A673 (cell line): ENCODE measurements at regions of chr4 and their contacts with region 1.

Region 1: GRCh38 chr4:5824635-5825034 is 68.3 kb downstream of the CRMP1 start:
- DNase-seq: peak; percentile 63
- H3K4me3 ChIP-seq: no peak overlapping the region
- H3K27ac ChIP-seq: no peak overlapping the region
- H3K4me1 ChIP-seq: no peaks in the 10 kb centered on the region
- H3K27me3 ChIP-seq: no peaks in the 10 kb centered on the region
- CTCF ChIP-seq: peak; percentile 68

Region 2: GRCh38 chr4:5338531-5338930 is 486.1 kb before region 1 on chr4:
- CTCF ChIA-PET with region 1: no interaction called
- POLR2A ChIA-PET with region 1: no interaction called
- intact Hi-C with region 1: no loop called
- DNase-seq: peak; percentile 29
- H3K4me3 ChIP-seq: no peak overlapping the region
- H3K27ac ChIP-seq: no peak overlapping the region
- H3K4me1 ChIP-seq: peaks cover 27% of the 10 kb centered on the region
- H3K27me3 ChIP-seq: no peaks in the 10 kb centered on the region
- CTCF ChIP-seq: no peak

Region 3: DNA sequence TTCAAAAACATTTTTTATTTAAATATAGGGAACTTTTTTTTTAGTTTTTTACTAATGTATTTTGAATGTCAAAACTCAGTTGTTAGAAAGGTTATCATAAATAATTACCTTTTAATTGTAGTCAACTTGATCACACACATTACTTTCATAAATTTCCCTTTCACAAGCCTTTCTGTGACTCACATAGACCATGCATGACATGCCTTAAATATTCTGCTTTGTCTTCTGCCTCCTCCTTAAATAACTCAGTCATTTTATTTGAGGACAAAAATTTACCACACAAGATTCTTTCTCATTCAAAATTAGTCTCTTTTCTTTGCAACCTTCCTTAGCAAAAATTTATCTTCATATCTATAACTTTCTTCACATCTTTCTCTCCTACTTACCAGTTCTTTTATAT is 336.2 kb before region 1 on chr4:
- CTCF ChIA-PET with region 1: no interaction called
- POLR2A ChIA-PET with region 1: no interaction called
- intact Hi-C with region 1: no loop called
- DNase-seq: no peak
- H3K4me3 ChIP-seq: no peak overlapping the region
- H3K27ac ChIP-seq: no peak overlapping the region
- H3K4me1 ChIP-seq: no peaks in the 10 kb centered on the region
- H3K27me3 ChIP-seq: no peaks in the 10 kb centered on the region
- CTCF ChIP-seq: no peak

Region 4: GRCh38 chr4:5890063-5890727 is 65.6 kb after region 1 on chr4:
- CTCF ChIA-PET with region 1: no interaction called
- POLR2A ChIA-PET with region 1: no interaction called
- intact Hi-C with region 1: loop called (anchors 5 kb)
- DNase-seq: peak; percentile 89
- H3K4me3 ChIP-seq: peak overlapping the region; percentile 39
- H3K27ac ChIP-seq: no peak overlapping the region
- H3K4me1 ChIP-seq: peaks cover 40% of the 10 kb centered on the region
- H3K27me3 ChIP-seq: peaks cover 16% of the 10 kb centered on the region
- CTCF ChIP-seq: no peak